ENCODE measurements at regions of chr18 and their contacts with region 1.

Region 1: DNA sequence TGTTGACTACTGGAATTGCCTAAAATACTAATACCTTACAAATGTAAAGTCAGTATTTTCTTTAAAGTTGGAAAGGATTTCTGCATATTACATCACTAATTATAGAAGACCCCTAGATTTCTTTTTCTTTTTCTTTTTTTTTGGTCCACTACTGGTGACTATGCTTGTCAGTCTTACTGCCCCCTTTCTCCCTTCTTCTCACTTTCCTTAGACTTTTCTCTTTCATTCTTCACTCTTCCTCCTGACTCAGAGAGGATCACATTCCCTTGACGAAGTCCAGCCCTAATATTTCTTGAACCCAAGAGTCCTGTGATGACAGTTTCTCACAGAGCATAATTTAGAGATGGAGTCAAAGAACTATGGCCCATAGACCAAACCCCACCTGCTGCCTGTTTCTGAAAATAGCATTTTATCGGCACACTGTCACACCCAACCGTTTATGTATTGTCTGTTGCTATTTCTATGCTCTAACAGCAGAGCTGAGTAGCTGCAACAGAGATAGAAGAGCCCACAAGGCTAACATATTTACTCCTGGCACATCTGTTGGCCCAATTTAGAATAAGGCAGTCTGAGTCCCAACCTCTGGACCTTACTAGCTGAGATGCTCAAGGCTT is 40.6 kb upstream of the RIOK3 start:
- DNase-seq: no peak
- H3K4me3 Mint-ChIP-seq: no peak overlapping the region
- H3K27ac Mint-ChIP-seq: no peak overlapping the region
- H3K4me1 Mint-ChIP-seq: no peaks in the 10 kb centered on the region
- H3K27me3 Mint-ChIP-seq: peaks cover 5% of the 10 kb centered on the region

Region 2: GRCh38 chr18:22800551-22800951 is 611.9 kb before region 1 on chr18:
- intact Hi-C with region 1: loop called (anchors 5 kb)
- DNase-seq: no peak
- H3K4me3 Mint-ChIP-seq: no peak overlapping the region
- H3K27ac Mint-ChIP-seq: no peak overlapping the region
- H3K4me1 Mint-ChIP-seq: no peaks in the 10 kb centered on the region
- H3K27me3 Mint-ChIP-seq: peaks cover 17% of the 10 kb centered on the region

Region 3: DNA sequence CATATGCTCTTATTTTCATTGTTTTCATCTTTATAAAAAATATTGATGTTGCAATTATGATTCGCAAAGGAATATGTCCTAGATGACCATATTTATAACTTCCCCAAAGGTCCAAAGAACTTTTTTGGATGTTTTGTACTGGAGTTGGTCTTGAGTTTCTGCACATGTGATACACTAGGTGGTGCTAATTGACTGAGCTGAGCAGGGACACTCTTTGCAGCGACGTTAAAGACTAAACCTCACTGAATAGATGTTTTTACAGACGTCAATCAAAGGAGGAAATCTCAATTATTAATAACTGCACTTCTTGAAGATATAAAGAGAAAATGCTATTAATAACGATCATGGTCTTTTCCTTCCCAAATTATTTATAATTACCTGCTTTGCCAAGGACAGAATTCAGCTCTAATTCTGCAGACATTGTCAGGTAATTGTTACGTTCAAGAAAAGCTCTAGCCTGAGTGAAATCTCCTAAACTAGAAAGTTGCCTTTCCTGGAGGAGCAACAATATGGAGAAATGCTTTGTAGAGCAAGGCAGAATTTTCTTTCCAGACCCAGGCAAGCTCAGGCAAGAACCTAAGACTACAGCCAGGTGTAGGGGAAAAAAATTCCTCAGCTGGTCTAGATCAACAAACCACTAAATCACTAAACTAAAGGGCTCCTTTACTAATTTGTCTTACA is 598.7 kb before region 1 on chr18:
- intact Hi-C with region 1: loop called (anchors 5 kb)
- DNase-seq: no peak
- H3K4me3 Mint-ChIP-seq: no peak overlapping the region
- H3K27ac Mint-ChIP-seq: no peak overlapping the region
- H3K4me1 Mint-ChIP-seq: no peaks in the 10 kb centered on the region
- H3K27me3 Mint-ChIP-seq: peaks cover 26% of the 10 kb centered on the region

Region 4: GRCh38 chr18:23032030-23032582 is 380.4 kb before region 1 on chr18:
- intact Hi-C with region 1: loop called (anchors 5 kb)
- DNase-seq: no peak
- H3K4me3 Mint-ChIP-seq: no peak overlapping the region
- H3K27ac Mint-ChIP-seq: no peak overlapping the region
- H3K4me1 Mint-ChIP-seq: no peaks in the 10 kb centered on the region
- H3K27me3 Mint-ChIP-seq: no peaks in the 10 kb centered on the region

Region 5: GRCh38 chr18:23356915-23357601 is 55.4 kb before region 1 on chr18:
- intact Hi-C with region 1: loop called (anchors 5 kb)
- DNase-seq: no peak
- H3K4me3 Mint-ChIP-seq: no peak overlapping the region
- H3K27ac Mint-ChIP-seq: no peak overlapping the region
- H3K4me1 Mint-ChIP-seq: peaks cover 21% of the 10 kb centered on the region
- H3K27me3 Mint-ChIP-seq: no peaks in the 10 kb centered on the region